ENCODE measurements at regions of chr2 and their contacts with region 1.

Region 1: GRCh38 chr2:73284296-73285158 is at the start of gene FBXO41:
- DNase-seq: peak; percentile 47
- ATAC-seq: peak; percentile 88
- H3K4me3 ChIP-seq: peak within 1 kb of the TSS; percentile 99
- H3K27ac ChIP-seq: peak within 1 kb of the TSS; percentile 80
- H3K4me1 ChIP-seq: peaks cover 11% of the 10 kb centered on the region
- H3K27me3 ChIP-seq: no peaks in the 10 kb centered on the region
- CTCF ChIP-seq: peak in 1 of 3 experiments; percentile 12; a peak in 1 of 6 replicates
- EP300 ChIP-seq: no peak
- POLR2A ChIP-seq: peak; percentile 79
- RAD21 ChIP-seq: no peak
- polyA plus RNA-seq, gene FBXO41: 1.9 to 2.0 TPM

Region 2: DNA sequence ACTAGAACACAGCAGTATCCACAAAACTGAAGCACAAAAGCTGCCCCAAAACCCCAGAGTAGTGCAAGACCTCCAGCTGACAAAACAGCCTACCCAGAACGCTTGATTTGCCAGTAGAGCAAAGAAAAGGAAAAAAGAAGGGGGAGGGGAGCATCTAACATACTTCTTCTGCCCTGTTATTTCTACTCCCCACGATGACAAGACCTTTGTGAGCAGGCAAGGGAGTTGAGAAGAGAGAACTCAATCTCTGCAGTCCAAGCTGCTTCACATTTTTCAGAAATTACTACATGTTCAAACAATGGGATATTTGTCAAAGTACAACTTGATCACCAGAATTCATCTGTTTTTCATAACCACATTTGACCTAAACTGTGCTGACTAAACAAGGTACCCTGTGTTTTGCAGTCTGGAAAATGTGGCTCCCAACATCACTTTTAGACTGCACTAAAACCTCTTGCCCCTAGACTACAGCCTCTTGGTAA is 745.4 kb before region 1 on chr2:
- CTCF ChIA-PET with region 1: no interaction called
- POLR2A ChIA-PET with region 1: no interaction called
- RAD21 ChIA-PET with region 1: no interaction called
- SMC1A ChIA-PET with region 1: no interaction called
- in situ Hi-C with region 1: no loop called
- intact Hi-C with region 1: no loop called
- DNase-seq: no peak
- ATAC-seq: no peak
- H3K4me3 ChIP-seq: no peak overlapping the region
- H3K27ac ChIP-seq: no peak overlapping the region
- H3K4me1 ChIP-seq: no peaks in the 10 kb centered on the region
- H3K27me3 ChIP-seq: no peaks in the 10 kb centered on the region
- CTCF ChIP-seq: no peak
- EP300 ChIP-seq: no peak
- POLR2A ChIP-seq: no peak
- RAD21 ChIP-seq: no peak

Region 3: DNA sequence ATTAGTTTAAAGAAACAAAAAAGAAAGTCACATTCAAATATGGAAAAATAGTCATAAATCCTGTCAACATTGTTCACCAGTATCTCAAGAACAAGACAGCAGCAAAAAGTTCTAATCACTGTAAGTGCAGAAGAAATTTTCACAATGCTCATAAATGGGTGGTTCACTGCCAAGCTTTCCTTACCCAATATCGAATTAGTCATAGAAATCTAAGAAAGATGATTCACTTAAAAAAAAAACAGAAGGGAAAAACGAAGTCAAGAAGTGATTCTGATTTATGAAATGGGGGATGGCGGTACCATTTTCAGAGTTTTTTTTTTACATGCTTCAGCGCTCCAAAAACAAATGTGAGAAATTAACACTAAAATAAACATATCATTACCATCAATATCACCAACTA is 615.4 kb before region 1 on chr2:
- CTCF ChIA-PET with region 1: no interaction called
- POLR2A ChIA-PET with region 1: no interaction called
- RAD21 ChIA-PET with region 1: no interaction called
- SMC1A ChIA-PET with region 1: no interaction called
- in situ Hi-C with region 1: no loop called
- intact Hi-C with region 1: no loop called
- DNase-seq: no peak
- ATAC-seq: no peak
- H3K4me3 ChIP-seq: no peak overlapping the region
- H3K27ac ChIP-seq: no peak overlapping the region
- H3K4me1 ChIP-seq: no peaks in the 10 kb centered on the region
- H3K27me3 ChIP-seq: no peaks in the 10 kb centered on the region
- CTCF ChIP-seq: no peak
- EP300 ChIP-seq: no peak
- POLR2A ChIP-seq: no peak
- RAD21 ChIP-seq: no peak

Region 4: GRCh38 chr2:73233154-73233931 is 51.2 kb before region 1 on chr2 and contains the start of gene PRADC1:
- CTCF ChIA-PET with region 1: interaction called, 99 read pairs
- POLR2A ChIA-PET with region 1: interaction called, 12 read pairs
- RAD21 ChIA-PET with region 1: interaction called, 21 read pairs
- SMC1A ChIA-PET with region 1: interaction called, 39 read pairs
- in situ Hi-C with region 1: no loop called
- intact Hi-C with region 1: loop called (anchors 2 kb)
- DNase-seq: peak; percentile 97
- ATAC-seq: peak; percentile 93
- H3K4me3 ChIP-seq: peak within 1 kb of the TSS; percentile 78
- H3K27ac ChIP-seq: peak within 1 kb of the TSS; percentile 91
- H3K4me1 ChIP-seq: peaks cover 4% of the 10 kb centered on the region
- H3K27me3 ChIP-seq: no peaks in the 10 kb centered on the region
- CTCF ChIP-seq: no peak
- EP300 ChIP-seq: no peak
- POLR2A ChIP-seq: peak; percentile 77
- RAD21 ChIP-seq: no peak
- polyA plus RNA-seq, gene PRADC1: 3.7 to 8.1 TPM